ENCODE measurements at regions of chr17 and their contacts with region 1.

Region 1: DNA sequence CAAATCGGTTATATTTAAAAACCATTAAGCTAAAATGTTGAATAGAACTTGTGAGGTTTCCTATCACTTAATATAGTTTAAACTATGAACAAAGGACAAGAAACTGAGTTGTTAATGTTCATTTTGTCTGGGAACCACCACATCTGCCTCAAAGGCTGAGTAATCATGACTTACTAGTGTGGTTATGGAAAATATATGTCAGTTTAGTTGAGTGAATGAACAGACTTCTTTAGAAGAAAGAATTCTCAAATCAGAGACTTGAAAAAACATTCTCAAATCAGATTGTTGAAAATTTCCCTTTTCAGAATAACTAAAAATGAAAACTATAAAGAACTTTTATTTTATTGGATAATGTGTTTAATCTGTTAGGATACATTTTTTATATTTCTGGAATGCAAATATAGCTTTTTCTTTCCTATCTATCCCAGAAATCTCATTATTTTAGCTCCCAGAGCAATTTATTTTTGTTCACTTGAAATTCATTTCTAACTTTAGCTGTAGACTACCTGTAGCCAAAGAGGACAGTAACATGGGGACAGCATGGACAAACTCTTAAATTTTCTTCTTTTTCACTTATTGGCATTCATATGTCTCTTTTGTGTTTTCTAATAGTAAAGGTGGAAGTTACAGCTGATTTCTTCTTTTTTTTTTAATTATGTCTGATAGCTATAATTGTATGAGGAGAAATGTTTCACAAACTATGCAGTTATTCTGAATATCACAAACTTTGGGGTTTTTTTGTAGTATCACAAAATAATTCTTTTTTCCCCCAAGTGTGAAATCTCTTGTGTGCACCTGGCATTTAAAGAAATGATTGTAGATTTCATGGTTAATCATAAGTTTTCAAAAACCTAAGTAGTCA is 55.3 kb downstream of the VMP1 start:
- DNase-seq: no peak
- ATAC-seq: peak; percentile 66
- H3K4me3 Mint-ChIP-seq: peak overlapping the region; percentile 63
- H3K27ac Mint-ChIP-seq: peak overlapping the region; percentile 98
- H3K4me1 Mint-ChIP-seq: peaks cover 68% of the 10 kb centered on the region
- H3K27me3 Mint-ChIP-seq: no peaks in the 10 kb centered on the region

Region 2: GRCh38 chr17:58337600-58338453 is 1424.9 kb before region 1 on chr17:
- CTCF ChIA-PET with region 1: no interaction called
- POLR2A ChIA-PET with region 1: no interaction called
- intact Hi-C with region 1: loop called in 1 of 2 experiments (anchors 2 kb)
- DNase-seq: peak; percentile 97
- ATAC-seq: peak; percentile 57
- H3K4me3 Mint-ChIP-seq: peak overlapping the region; percentile 100
- H3K27ac Mint-ChIP-seq: peak overlapping the region; percentile 99
- H3K4me1 Mint-ChIP-seq: peaks cover 26% of the 10 kb centered on the region
- H3K27me3 Mint-ChIP-seq: no peaks in the 10 kb centered on the region

Region 3: GRCh38 chr17:59565171-59565969 is 197.4 kb before region 1 on chr17 and contains the start of gene DHX40:
- CTCF ChIA-PET with region 1: no interaction called
- POLR2A ChIA-PET with region 1: no interaction called
- intact Hi-C with region 1: no loop called
- DNase-seq: peak; percentile 98
- ATAC-seq: peak; percentile 89
- H3K4me3 Mint-ChIP-seq: peak within 1 kb of the TSS; percentile 99
- H3K27ac Mint-ChIP-seq: peak within 1 kb of the TSS; percentile 99
- H3K4me1 Mint-ChIP-seq: peaks cover 20% of the 10 kb centered on the region
- H3K27me3 Mint-ChIP-seq: no peaks in the 10 kb centered on the region
- total RNA-seq, gene DHX40: 22.9 to 24.1 TPM

Region 4: DNA sequence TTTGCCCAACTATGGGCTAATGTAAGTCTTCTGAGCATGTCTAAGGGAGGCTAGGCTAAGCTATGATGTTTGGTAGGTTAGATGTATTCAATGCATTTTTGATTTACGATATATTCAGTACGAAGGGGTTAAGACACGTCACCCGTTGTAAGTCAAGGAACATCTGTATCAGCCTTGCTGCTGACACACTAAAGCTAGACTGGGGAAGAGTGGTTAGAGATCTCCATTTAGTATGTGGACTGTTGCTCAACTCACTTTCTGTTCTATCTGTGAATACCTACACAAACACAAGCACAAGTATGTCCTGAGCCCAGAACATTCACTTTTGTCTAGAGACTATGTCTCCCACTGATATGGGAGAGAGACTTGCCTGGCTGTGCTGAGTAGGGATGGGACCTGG is 16.3 kb after region 1 on chr17:
- CTCF ChIA-PET with region 1: interaction called, 45 read pairs
- POLR2A ChIA-PET with region 1: interaction called, 6 read pairs
- intact Hi-C with region 1: loop called in 1 of 2 experiments (anchors 1 kb)
- DNase-seq: no peak
- ATAC-seq: peak; percentile 13
- H3K4me3 Mint-ChIP-seq: no peak overlapping the region
- H3K27ac Mint-ChIP-seq: peak overlapping the region; percentile 79
- H3K4me1 Mint-ChIP-seq: peaks cover 54% of the 10 kb centered on the region
- H3K27me3 Mint-ChIP-seq: no peaks in the 10 kb centered on the region

Region 5: GRCh38 chr17:59837308-59838051 is 74.7 kb after region 1 on chr17:
- CTCF ChIA-PET with region 1: interaction called, 17 read pairs
- POLR2A ChIA-PET with region 1: interaction called, 83 read pairs
- intact Hi-C with region 1: no loop called
- DNase-seq: peak; percentile 77
- ATAC-seq: peak; percentile 77
- H3K4me3 Mint-ChIP-seq: peak overlapping the region; percentile 100
- H3K27ac Mint-ChIP-seq: peak overlapping the region; percentile 100
- H3K4me1 Mint-ChIP-seq: peaks cover 41% of the 10 kb centered on the region
- H3K27me3 Mint-ChIP-seq: peaks cover 3% of the 10 kb centered on the region

Region 6: DNA sequence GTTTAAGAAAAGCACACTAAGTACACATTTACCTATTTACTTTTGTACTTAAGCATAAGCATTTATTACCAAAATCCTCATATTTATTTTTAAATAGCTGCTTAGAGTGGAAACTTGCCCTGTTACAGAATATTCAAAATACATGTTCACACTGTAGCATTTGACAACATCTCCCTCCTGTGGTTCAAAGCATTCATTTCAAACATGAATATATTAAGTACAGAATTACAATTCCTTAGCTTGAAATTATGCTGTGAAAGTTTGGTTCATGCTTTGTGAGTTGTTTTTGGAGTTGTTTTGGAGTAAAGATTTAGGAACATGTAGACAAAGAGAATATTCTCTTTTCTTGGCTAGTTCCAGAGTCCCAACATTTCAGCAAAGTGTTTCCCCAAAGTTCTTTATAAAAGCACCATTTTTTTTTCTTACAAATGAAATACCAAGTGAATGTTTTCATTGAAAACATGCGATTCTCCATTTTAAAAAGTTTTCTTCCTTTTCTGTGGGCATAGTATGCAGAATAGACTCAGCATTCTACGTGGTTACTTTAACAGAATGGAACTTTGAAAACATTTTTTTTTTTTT is 96.8 kb after region 1 on chr17:
- CTCF ChIA-PET with region 1: interaction called, 17 read pairs
- POLR2A ChIA-PET with region 1: no interaction called
- intact Hi-C with region 1: no loop called
- DNase-seq: no peak
- ATAC-seq: peak; percentile 60
- H3K4me3 Mint-ChIP-seq: no peak overlapping the region
- H3K27ac Mint-ChIP-seq: peak overlapping the region; percentile 37
- H3K4me1 Mint-ChIP-seq: peaks cover 20% of the 10 kb centered on the region
- H3K27me3 Mint-ChIP-seq: no peaks in the 10 kb centered on the region